ACHN (cell line): ENCODE measurements at regions of chr9 and their contacts with region 1.

Region 1: GRCh38 chr9:70340572-70340971 is 73.9 kb downstream of the KLF9 start:
- DNase-seq: peak; percentile 48

Region 2: DNA sequence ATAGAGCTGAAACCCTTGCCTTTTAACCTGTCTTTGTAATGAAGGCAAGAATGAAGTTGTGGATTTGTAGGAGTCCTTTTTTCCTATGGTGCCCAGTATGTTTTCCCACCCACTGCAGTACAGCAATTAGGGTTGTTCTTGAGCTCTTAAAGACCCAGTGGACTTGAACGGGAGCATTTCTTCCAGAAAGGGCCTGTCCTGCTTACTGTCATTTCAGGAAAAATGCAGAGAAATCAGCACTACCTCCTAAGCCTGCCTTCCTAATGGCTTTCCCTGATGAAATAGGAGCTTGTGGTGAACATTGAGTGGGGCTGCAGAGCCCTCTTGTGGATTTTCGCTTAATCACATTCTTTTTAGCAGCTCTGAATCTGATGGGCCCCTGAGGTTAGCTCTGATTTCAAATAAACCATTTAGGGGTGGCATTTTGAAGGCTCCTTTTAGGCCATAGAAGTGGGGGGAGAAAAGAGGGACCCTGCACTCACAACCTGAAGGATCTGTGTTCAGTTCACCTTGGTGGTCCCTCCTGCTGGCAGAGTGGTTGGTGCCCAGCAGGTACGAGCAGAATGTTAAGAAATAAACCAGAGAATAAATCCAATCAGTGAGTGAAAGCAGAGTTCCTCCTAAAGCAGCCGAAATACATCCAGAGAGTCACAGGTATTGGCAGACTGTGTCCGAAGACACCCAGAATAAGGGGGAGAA is 261.9 kb after region 1 on chr9:
- in situ Hi-C with region 1: loop called (anchors 25 kb)
- DNase-seq: peak; percentile 53